Gastrocnemius medialis (tissue), 4 donors: ENCODE measurements at regions of chr7 and their contacts with region 1.

Region 1: GRCh38 chr7:15720849-15721471 is 34.5 kb upstream of the MEOX2 start:
- DNase-seq: no peak
- ATAC-seq: no peak
- H3K4me3 ChIP-seq: no peak overlapping the region
- H3K27ac ChIP-seq: peak overlapping the region in 1 of 4 donors; percentile 4
- H3K4me1 ChIP-seq: peaks cover 0 to 3% of the 10 kb centered on the region in 2 donors
- H3K27me3 ChIP-seq: no peaks in the 10 kb centered on the region
- CTCF ChIP-seq: peak in 4 of 5 experiments; percentile 31 to 63 (median 52)
- POLR2A ChIP-seq: no peak

Region 2: DNA sequence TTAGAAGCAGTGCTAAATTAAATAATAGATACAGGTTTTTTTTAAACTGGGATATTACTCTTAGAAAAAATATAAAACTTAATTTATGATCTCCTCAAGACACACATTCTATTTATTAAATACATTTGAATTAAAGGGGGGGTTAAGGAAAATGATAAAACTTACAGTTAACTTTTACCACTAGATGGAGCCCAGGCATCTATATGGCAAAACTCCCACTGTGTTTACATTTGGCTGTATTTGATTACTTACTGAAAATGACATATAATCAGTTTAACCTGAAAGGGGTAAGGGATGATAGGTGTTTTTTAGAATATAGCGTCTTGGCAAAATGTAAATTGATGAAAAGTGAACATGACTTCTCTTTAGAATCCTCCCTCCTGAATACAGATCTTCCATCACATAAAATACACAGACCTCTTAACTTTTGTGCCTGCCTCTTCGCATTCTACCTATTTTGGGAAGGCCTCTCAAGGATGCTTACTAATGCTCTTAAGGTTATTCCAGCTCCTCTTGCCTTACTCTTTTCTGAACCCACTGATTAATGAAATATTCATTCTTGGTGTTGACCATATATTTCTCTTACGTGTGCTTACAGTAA is 394.8 kb before region 1 on chr7:
- in situ Hi-C with region 1: loop called in 3 of 4 experiments (anchors 10 to 25 kb)
- intact Hi-C with region 1: loop called (anchors 10 kb)
- DNase-seq: no peak
- ATAC-seq: no peak
- H3K4me3 ChIP-seq: no peak overlapping the region
- H3K27ac ChIP-seq: no peak overlapping the region
- H3K4me1 ChIP-seq: peaks cover 0 to 8% of the 10 kb centered on the region in 2 donors
- H3K27me3 ChIP-seq: no peaks in the 10 kb centered on the region
- CTCF ChIP-seq: peak in 4 of 5 experiments; percentile 11 to 56 (median 36)
- POLR2A ChIP-seq: no peak